ENCODE measurements at regions of chr7 and their contacts with region 1.

Region 1: GRCh38 chr7:20330240-20330927 is at the start of gene ITGB8:
- DNase-seq: peak; percentile 94
- ATAC-seq: peak; percentile 84
- H3K4me3 ChIP-seq: peak within 1 kb of the TSS; percentile 51
- H3K27ac ChIP-seq: peak within 1 kb of the TSS; percentile 82
- H3K4me1 ChIP-seq: peaks cover 2% of the 10 kb centered on the region; the same call in 1 of the 2 replicates
- H3K27me3 ChIP-seq: no peaks in the 10 kb centered on the region
- CTCF ChIP-seq: no peak
- POLR2A ChIP-seq: peak; percentile 48; the same call in 1 of the 2 replicates
- RAD21 ChIP-seq: no peak
- total RNA-seq, gene ITGB8: 10.2 and 10.8 TPM in 2 replicates

Region 2: DNA sequence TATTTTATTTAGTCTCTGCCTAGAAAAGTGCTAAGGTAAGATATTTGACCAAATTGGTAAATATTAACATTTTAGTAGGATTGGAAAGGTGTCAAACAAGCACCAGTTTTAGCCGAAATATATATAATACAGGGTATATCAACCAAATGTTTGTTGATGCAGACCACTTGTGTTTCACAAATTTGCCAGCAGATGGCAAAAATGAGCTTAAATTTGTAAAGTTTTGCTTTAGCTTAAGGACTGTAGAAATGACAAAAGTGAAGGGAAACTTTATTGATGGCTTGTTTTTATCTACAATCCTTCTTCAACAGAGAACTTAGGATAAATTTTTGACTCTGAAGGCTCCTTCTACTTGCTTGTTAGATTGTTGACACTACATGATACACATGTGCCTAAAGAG is 616.7 kb before region 1 on chr7:
- CTCF ChIA-PET with region 1: no interaction called
- POLR2A ChIA-PET with region 1: no interaction called
- dilution Hi-C with region 1: no loop called
- in situ Hi-C with region 1: no loop called
- intact Hi-C with region 1: loop called (anchors 5 kb)
- DNase-seq: peak; percentile 45
- ATAC-seq: peak; percentile 35; the same call in 1 of the 2 replicates
- H3K4me3 ChIP-seq: no peak overlapping the region
- H3K27ac ChIP-seq: no peak overlapping the region
- H3K4me1 ChIP-seq: no peaks in the 10 kb centered on the region
- H3K27me3 ChIP-seq: no peaks in the 10 kb centered on the region
- CTCF ChIP-seq: peak; percentile 58
- POLR2A ChIP-seq: no peak
- RAD21 ChIP-seq: peak; percentile 48

Region 3: DNA sequence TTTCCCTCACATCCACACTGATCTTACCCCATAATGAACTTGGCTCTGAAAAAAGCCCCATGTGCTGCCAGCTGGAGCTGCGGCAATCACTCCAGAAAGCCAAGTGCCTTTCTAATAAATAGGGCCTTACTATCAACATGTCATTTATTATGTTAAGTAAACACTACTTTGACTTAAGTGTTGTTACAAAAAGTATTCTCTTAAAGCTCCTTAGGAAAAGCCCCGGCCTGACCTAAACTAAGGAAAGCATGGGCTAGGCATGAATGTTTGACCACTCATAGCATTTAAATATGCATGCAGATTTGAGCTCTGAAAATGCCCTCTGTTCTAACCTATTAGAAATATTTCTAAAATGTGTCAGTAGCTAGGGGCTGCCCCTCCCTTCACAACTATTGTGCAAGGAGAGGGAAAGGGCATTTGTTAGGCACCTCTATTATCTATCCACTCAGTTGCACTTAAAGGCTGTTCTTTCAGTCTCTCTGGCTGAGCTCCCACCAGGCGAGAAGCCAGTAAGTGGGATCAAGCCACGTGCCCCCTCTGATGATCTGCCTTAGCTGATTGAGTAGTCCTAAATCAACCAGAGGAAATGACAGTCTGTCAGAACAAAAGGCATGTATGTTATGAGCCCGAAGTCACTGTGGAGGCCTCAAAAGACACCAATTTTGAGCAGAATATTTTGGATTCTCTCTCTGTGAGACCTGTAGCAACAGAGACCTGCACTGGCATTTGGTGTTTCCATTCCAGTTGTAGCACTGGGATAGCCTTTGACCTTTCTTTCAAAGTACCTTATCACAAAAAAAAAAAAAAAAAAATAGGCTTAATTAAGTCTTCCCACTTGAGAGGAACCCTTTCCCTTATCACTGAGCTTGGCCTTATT is 77.4 kb after region 1 on chr7:
- CTCF ChIA-PET with region 1: no interaction called
- POLR2A ChIA-PET with region 1: no interaction called
- dilution Hi-C with region 1: no loop called
- in situ Hi-C with region 1: no loop called
- intact Hi-C with region 1: loop called (anchors 5 kb)
- DNase-seq: peak; percentile 43
- ATAC-seq: peak; percentile 86
- H3K4me3 ChIP-seq: no peak overlapping the region
- H3K27ac ChIP-seq: peak overlapping the region; percentile 78; the same call in 1 of the 2 replicates
- H3K4me1 ChIP-seq: peaks cover 7% of the 10 kb centered on the region; the same call in 1 of the 2 replicates
- H3K27me3 ChIP-seq: no peaks in the 10 kb centered on the region
- CTCF ChIP-seq: no peak
- POLR2A ChIP-seq: no peak
- RAD21 ChIP-seq: no peak

Measured in IMR-90 (cell line).